Activated T-helper 2 cell treated with anti-CD3 and anti-CD28 coated beads, Interferon-gamma antibody, Interleukin-2, Interleukin-4, amounts not matched to agents 10 μg/mL and 5 μg/mL and 100 μg/mL, durations not matched to agents 14 hours and 24 hours and 36 hours (primary cell): ENCODE measurements at regions of chr9 and their contacts with region 1.

Region 1: GRCh38 chr9:122904823-122905710 is at the start of gene RC3H2:
- DNase-seq: peak; percentile 97
- H3K4me3 Mint-ChIP-seq: peak within 1 kb of the TSS; percentile 92
- H3K27ac Mint-ChIP-seq: peak within 1 kb of the TSS; percentile 94
- H3K4me1 Mint-ChIP-seq: peaks cover 18% of the 10 kb centered on the region
- H3K27me3 Mint-ChIP-seq: no peaks in the 10 kb centered on the region
- total RNA-seq, gene RC3H2: 37.0 and 38.3 TPM in 2 replicates

Region 2: GRCh38 chr9:122827761-122828093 is 77.3 kb before region 1 on chr9:
- intact Hi-C with region 1: loop called (anchors 2 kb)
- DNase-seq: no peak
- H3K4me3 Mint-ChIP-seq: peak overlapping the region; percentile 95
- H3K27ac Mint-ChIP-seq: peak overlapping the region; percentile 91
- H3K4me1 Mint-ChIP-seq: peaks cover 19% of the 10 kb centered on the region
- H3K27me3 Mint-ChIP-seq: no peaks in the 10 kb centered on the region

Region 3: GRCh38 chr9:122931226-122932121 is 26.4 kb after region 1 on chr9 and contains the start of gene ZBTB26:
- intact Hi-C with region 1: loop called (anchors 1 kb)
- DNase-seq: peak; percentile 79
- H3K4me3 Mint-ChIP-seq: no peak within 1 kb of the TSS
- H3K27ac Mint-ChIP-seq: peak within 1 kb of the TSS; percentile 90
- H3K4me1 Mint-ChIP-seq: peaks cover 11% of the 10 kb centered on the region
- H3K27me3 Mint-ChIP-seq: no peaks in the 10 kb centered on the region
- total RNA-seq, gene ZBTB26: 7.4 and 8.2 TPM in 2 replicates

Region 4: DNA sequence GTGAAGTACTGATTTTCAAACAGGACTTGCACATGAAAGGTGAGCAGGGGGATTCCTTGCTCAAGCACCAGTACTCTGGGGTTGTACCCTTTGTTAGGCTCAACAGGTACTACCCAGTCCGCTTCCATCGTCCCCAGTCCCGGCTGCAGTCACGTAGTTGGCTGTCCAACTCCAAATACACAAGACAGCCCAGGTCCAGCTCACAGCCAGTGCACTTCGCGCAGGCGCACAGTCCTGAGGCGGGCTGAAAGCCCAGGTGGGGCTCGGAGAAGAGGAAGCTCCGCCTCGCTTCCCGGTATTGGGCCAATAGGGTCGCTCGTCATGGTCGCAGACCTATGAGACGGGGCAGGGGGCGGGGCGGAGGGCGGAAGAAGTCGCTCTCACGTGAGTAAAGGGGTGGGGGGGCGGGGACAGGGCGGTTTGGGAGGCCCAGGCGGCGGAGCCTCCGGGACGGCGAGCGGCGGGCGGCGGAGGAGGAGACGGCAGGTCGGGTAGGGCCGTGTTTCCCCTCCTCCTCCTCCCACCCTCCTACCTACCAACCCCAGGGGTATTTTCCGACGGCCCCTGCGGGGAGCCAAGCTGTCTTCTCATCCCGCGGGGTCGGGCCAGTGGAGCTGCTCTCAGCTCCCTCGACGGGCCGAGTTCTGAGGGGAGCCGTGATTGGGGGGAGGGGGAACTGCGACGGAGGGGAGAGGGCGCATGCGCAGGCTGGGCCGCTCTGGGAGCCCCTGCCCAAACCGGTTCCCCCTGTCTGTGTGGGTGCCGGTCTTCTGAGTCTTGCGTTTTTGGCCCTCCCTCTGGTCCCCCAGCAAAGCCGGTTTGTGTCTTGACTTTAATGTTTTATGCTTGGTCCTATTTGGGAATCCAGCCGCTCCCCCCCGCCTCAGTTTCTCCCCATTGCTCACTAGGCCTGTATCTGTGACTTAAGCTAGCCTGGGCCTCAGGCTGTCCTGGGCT is 35.8 kb after region 1 on chr9 and contains the start of gene RABGAP1:
- intact Hi-C with region 1: loop called (anchors 2 kb)
- DNase-seq: peak; percentile 96
- H3K4me3 Mint-ChIP-seq: peak within 1 kb of the TSS; percentile 91
- H3K27ac Mint-ChIP-seq: peak within 1 kb of the TSS; percentile 87
- H3K4me1 Mint-ChIP-seq: peaks cover 31% of the 10 kb centered on the region
- H3K27me3 Mint-ChIP-seq: no peaks in the 10 kb centered on the region
- total RNA-seq, gene RABGAP1: 26.5 and 29.2 TPM in 2 replicates

Region 5: GRCh38 chr9:122991370-122991830 is 86.3 kb after region 1 on chr9:
- intact Hi-C with region 1: loop called (anchors 1 kb)
- DNase-seq: peak; percentile 8
- H3K4me3 Mint-ChIP-seq: no peak overlapping the region
- H3K27ac Mint-ChIP-seq: no peak overlapping the region
- H3K4me1 Mint-ChIP-seq: peaks cover 8% of the 10 kb centered on the region
- H3K27me3 Mint-ChIP-seq: no peaks in the 10 kb centered on the region

Region 6: GRCh38 chr9:123002754-123003153 is 97.7 kb after region 1 on chr9:
- intact Hi-C with region 1: no loop called
- DNase-seq: no peak
- H3K4me3 Mint-ChIP-seq: no peak overlapping the region
- H3K27ac Mint-ChIP-seq: no peak overlapping the region
- H3K4me1 Mint-ChIP-seq: peaks cover 7% of the 10 kb centered on the region
- H3K27me3 Mint-ChIP-seq: no peaks in the 10 kb centered on the region

Region 7: GRCh38 chr9:123349691-123350480 is 444.8 kb after region 1 on chr9:
- intact Hi-C with region 1: loop called (anchors 10 kb)
- DNase-seq: peak; percentile 44
- H3K4me3 Mint-ChIP-seq: no peak overlapping the region
- H3K27ac Mint-ChIP-seq: no peak overlapping the region
- H3K4me1 Mint-ChIP-seq: peaks cover 2% of the 10 kb centered on the region
- H3K27me3 Mint-ChIP-seq: peaks cover 7% of the 10 kb centered on the region